GM12878 (cell line): ENCODE measurements at regions of chr17 and their contacts with region 1.

Region 1: DNA sequence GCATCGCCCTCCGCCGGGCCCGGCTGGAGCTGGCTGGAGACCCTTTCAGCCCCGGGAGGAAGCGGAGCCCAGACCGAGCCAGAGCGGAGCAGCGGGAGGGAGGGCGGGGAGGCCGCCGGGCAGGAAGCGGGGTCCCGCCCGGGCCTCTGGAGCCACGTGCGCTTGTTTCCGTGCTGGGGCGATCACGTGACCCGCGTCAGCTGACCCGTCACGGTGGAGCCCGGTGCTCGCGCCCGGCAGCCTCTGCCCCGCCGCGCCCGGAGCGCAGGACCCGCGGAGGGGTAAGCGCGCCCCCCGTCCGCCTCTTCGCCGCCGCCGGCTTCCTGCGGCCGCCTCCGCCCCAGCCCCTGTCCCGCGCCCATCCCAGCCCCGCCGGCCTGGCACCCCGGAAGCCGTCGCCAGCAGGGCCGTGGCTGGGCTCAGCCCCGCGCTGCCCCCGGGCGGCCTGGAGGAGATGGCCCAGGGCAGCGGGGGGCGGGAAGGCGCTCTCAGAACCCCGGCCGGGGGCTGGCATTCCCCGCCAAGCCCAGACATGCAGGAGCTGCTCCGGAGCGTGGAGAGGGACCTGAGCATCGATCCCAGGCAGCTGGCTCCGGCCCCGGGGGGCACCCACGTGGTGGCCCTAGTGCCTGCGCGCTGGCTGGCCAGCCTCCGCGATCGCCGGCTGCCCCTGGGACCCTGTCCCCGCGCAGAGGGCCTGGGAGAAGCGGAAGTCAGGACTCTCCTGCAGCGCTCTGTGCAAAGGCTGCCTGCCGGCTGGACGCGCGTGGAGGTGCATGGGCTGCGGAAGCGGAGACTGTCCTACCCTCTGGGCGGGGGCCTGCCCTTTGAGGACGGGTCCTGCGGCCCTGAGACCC is at the start of gene WDR81:
- DNase-seq: no peak
- ATAC-seq: peak; percentile 69
- H3K4me3 ChIP-seq: peak within 1 kb of the TSS; percentile 86
- H3K27ac ChIP-seq: peak within 1 kb of the TSS; percentile 95
- H3K4me1 ChIP-seq: peaks cover 28% of the 10 kb centered on the region
- H3K27me3 ChIP-seq: no peaks in the 10 kb centered on the region
- CTCF ChIP-seq: no peak
- EP300 ChIP-seq: no peak
- POLR2A ChIP-seq: peak; percentile 65
- RAD21 ChIP-seq: no peak
- polyA plus RNA-seq, gene WDR81: 0.13 TPM in 1 of 2 experiments, not detected in the other

Region 2: GRCh38 chr17:1267471-1267947 is 457.2 kb before region 1 on chr17:
- CTCF ChIA-PET with region 1: no interaction called
- POLR2A ChIA-PET with region 1: no interaction called
- RAD21 ChIA-PET with region 1: no interaction called
- SMC1A ChIA-PET with region 1: no interaction called
- in situ Hi-C with region 1: no loop called
- intact Hi-C with region 1: no loop called
- DNase-seq: no peak
- ATAC-seq: no peak
- H3K4me3 ChIP-seq: peak overlapping the region; percentile 81
- H3K27ac ChIP-seq: peak overlapping the region; percentile 55
- H3K4me1 ChIP-seq: peaks cover 4% of the 10 kb centered on the region
- H3K27me3 ChIP-seq: no peaks in the 10 kb centered on the region; a peak in 1 of 4 replicates
- CTCF ChIP-seq: no peak
- EP300 ChIP-seq: no peak
- POLR2A ChIP-seq: no peak
- RAD21 ChIP-seq: no peak

Region 3: DNA sequence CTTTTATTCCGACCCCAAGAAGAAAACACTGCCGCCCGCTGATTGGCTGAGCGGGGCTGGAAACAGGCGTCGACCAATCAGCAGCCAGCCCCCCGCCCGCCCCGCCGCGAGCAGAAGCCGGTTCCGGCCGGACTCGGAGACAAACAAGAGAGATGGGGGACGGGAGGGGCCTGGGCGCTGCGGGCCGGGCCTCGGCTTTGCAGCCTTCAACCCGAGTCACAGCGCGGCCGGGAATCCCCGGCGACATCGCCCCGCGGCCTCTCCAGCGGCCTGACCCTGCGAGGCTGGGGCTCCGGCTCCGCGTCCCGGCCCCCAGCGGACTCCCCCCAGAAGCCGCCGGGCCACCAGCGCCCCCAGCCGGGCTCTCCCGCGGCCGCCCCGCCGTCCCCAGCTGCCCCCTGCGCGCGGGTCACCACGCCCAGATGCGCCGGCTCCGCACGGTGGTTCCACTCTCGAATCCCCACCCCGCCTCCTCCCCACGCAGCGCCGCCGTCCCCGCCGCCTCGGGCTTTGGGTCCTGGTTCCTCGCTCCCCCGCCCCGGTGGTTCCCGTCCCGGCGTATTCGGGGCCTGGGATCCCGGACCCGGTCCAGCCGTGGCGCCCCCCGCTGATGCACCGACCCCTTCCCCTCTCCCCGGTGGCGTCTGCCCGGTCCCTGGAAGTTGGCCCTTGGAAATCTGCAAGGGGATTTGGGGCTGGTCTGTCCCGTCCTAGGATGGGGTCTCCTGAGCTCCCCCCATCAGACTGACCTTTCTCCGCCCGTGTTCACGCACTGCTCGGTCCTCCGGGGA is 95.7 kb before region 1 on chr17:
- CTCF ChIA-PET with region 1: no interaction called
- POLR2A ChIA-PET with region 1: no interaction called
- RAD21 ChIA-PET with region 1: no interaction called
- SMC1A ChIA-PET with region 1: no interaction called
- in situ Hi-C with region 1: no loop called
- intact Hi-C with region 1: no loop called
- DNase-seq: no peak
- ATAC-seq: peak; percentile 84
- H3K4me3 ChIP-seq: peak overlapping the region; percentile 88
- H3K27ac ChIP-seq: peak overlapping the region; percentile 87
- H3K4me1 ChIP-seq: peaks cover 42% of the 10 kb centered on the region
- H3K27me3 ChIP-seq: no peaks in the 10 kb centered on the region
- CTCF ChIP-seq: peak in 2 of 3 experiments; percentile 30 to 51; a peak in 4 of 6 replicates
- EP300 ChIP-seq: no peak
- POLR2A ChIP-seq: peak; percentile 70
- RAD21 ChIP-seq: peak; percentile 40; the same call in 1 of the 2 replicates

Region 4: DNA sequence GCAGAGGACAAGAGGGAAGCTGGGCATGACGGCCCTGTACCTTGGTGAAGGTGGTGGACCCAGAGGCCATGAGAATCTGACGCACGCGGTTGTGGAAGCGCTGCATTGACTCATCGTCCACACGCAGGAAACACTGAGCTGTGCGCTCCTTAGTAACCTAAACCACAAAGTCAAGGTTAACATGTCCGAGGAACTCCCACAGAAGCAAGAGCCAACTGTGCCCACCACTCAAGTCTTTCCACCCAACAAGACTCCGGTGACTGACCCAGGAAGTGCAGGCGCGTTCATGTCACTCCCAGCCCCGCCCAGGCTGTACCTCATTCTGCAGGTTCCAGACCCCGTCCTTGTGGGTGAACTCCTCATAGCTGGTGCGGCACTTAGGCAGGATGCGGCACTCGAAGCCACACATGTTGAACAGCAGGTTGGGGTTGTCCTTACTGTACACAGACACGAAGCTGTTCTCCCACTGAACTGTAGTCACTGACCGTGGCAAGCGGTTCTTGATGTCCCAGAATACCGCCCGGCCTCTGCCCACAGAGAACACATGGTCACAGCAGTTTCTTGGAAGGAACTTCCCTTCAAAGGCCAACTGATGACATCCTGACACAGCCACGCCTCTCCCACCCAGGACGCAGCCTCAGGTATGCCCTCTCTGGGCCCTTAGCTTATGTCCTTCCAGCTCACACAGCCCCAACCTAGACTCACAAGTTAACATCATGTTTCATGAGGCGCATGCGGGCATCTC is 51.5 kb before region 1 on chr17:
- CTCF ChIA-PET with region 1: interaction called, 8 read pairs
- POLR2A ChIA-PET with region 1: no interaction called
- RAD21 ChIA-PET with region 1: interaction called, 11 read pairs
- SMC1A ChIA-PET with region 1: interaction called, 6 read pairs
- in situ Hi-C with region 1: no loop called
- intact Hi-C with region 1: loop called (anchors 5 kb)
- DNase-seq: no peak
- ATAC-seq: no peak
- H3K4me3 ChIP-seq: no peak overlapping the region
- H3K27ac ChIP-seq: no peak overlapping the region
- H3K4me1 ChIP-seq: no peaks in the 10 kb centered on the region
- H3K27me3 ChIP-seq: no peaks in the 10 kb centered on the region
- CTCF ChIP-seq: no peak
- EP300 ChIP-seq: no peak
- POLR2A ChIP-seq: peak; percentile 66
- RAD21 ChIP-seq: no peak

Region 5: GRCh38 chr17:1743088-1743439 is 18.3 kb after region 1 on chr17:
- CTCF ChIA-PET with region 1: no interaction called
- POLR2A ChIA-PET with region 1: no interaction called
- RAD21 ChIA-PET with region 1: no interaction called
- SMC1A ChIA-PET with region 1: no interaction called
- in situ Hi-C with region 1: no loop called
- intact Hi-C with region 1: no loop called
- DNase-seq: no peak
- ATAC-seq: peak; percentile 22; the same call in 2 of the 3 replicates
- H3K4me3 ChIP-seq: no peak overlapping the region
- H3K27ac ChIP-seq: no peak overlapping the region
- H3K4me1 ChIP-seq: no peaks in the 10 kb centered on the region
- H3K27me3 ChIP-seq: no peaks in the 10 kb centered on the region
- CTCF ChIP-seq: no peak
- EP300 ChIP-seq: no peak
- POLR2A ChIP-seq: no peak
- RAD21 ChIP-seq: no peak

Region 6: GRCh38 chr17:1769822-1770477 is 45.2 kb after region 1 on chr17:
- CTCF ChIA-PET with region 1: interaction called, 19 read pairs
- POLR2A ChIA-PET with region 1: no interaction called
- RAD21 ChIA-PET with region 1: interaction called, 4 read pairs
- SMC1A ChIA-PET with region 1: interaction called, 3 read pairs
- in situ Hi-C with region 1: no loop called
- intact Hi-C with region 1: no loop called
- DNase-seq: no peak
- ATAC-seq: no peak; the same call in 2 of the 3 replicates
- H3K4me3 ChIP-seq: no peak overlapping the region
- H3K27ac ChIP-seq: no peak overlapping the region
- H3K4me1 ChIP-seq: peaks cover 7% of the 10 kb centered on the region
- H3K27me3 ChIP-seq: no peaks in the 10 kb centered on the region
- CTCF ChIP-seq: no peak
- EP300 ChIP-seq: no peak
- POLR2A ChIP-seq: 0 out of 2 replicates have a peak, but pooled peaks have one; percentile 29
- RAD21 ChIP-seq: no peak

Region 7: GRCh38 chr17:1789936-1790335 is 65.2 kb after region 1 on chr17:
- CTCF ChIA-PET with region 1: interaction called, 121 read pairs
- POLR2A ChIA-PET with region 1: no interaction called
- RAD21 ChIA-PET with region 1: interaction called, 80 read pairs
- SMC1A ChIA-PET with region 1: interaction called, 88 read pairs
- in situ Hi-C with region 1: no loop called
- intact Hi-C with region 1: no loop called
- DNase-seq: no peak
- ATAC-seq: peak; percentile 54
- H3K4me3 ChIP-seq: no peak overlapping the region
- H3K27ac ChIP-seq: no peak overlapping the region
- H3K4me1 ChIP-seq: no peaks in the 10 kb centered on the region
- H3K27me3 ChIP-seq: no peaks in the 10 kb centered on the region
- CTCF ChIP-seq: no peak; a peak in 1 of 6 replicates
- EP300 ChIP-seq: no peak
- POLR2A ChIP-seq: no peak
- RAD21 ChIP-seq: no peak

Region 8: DNA sequence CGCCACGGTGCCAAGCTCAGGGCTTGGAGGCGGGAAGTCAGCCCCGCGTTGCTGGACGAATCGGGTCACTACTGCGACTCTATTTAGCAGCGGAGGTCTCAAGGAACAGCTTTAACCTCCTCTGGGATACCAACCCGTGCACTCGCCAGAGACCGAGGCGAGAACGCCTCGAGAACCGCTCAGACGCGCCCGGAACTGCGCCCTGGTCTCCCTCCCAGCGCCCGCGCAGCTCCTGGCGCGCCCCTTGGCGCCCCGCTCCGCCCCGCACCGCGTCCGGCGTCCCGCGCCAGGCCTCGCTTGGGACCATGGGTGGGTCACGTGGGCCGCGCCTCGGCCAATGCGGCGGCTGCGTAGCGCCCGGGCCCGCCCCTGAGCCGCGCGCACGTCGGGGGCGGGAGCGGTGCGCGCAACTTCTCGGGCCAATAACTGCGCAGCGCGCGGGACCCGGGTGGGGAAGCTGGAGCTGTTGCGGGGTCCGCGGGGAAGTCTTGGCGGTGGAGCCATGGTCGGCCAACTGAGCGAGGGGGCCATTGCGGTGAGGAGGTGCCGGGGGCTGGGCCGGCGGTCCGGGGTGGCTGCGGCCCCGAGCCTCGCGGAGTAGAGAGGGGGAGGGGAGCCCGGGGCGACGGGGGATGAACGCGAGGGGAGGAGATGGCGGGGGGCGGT is 105.0 kb after region 1 on chr17 and contains the starts of genes RPA1 and SMYD4:
- CTCF ChIA-PET with region 1: interaction called, 26 read pairs
- POLR2A ChIA-PET with region 1: interaction called, 5 read pairs
- RAD21 ChIA-PET with region 1: interaction called, 17 read pairs
- SMC1A ChIA-PET with region 1: interaction called, 20 read pairs
- in situ Hi-C with region 1: loop called (anchors 5 kb)
- intact Hi-C with region 1: no loop called
- DNase-seq: peak; percentile 48
- ATAC-seq: peak; percentile 97
- H3K4me3 ChIP-seq: peak within 1 kb of the TSS; percentile 98
- H3K27ac ChIP-seq: peak within 1 kb of the TSS; percentile 83
- H3K4me1 ChIP-seq: peaks cover 15% of the 10 kb centered on the region
- H3K27me3 ChIP-seq: no peaks in the 10 kb centered on the region
- CTCF ChIP-seq: no peak
- EP300 ChIP-seq: no peak
- POLR2A ChIP-seq: peak; percentile 87
- RAD21 ChIP-seq: no peak
- polyA plus RNA-seq, gene RPA1: 35.9 to 50.6 TPM
- polyA plus RNA-seq, gene SMYD4: 2.1 to 2.6 TPM

Region 9: GRCh38 chr17:1882836-1883235 is 158.1 kb after region 1 on chr17:
- CTCF ChIA-PET with region 1: interaction called, 38 read pairs
- POLR2A ChIA-PET with region 1: interaction called, 3 read pairs
- RAD21 ChIA-PET with region 1: interaction called, 3 read pairs
- SMC1A ChIA-PET with region 1: interaction called, 6 read pairs
- in situ Hi-C with region 1: no loop called
- intact Hi-C with region 1: no loop called
- DNase-seq: no peak
- ATAC-seq: peak; percentile 49; the same call in 1 of the 3 replicates
- H3K4me3 ChIP-seq: no peak overlapping the region
- H3K27ac ChIP-seq: no peak overlapping the region
- H3K4me1 ChIP-seq: no peaks in the 10 kb centered on the region
- H3K27me3 ChIP-seq: no peaks in the 10 kb centered on the region
- CTCF ChIP-seq: peak; percentile 58 to 63 (median 62); a peak in 5 of 6 replicates
- EP300 ChIP-seq: no peak
- POLR2A ChIP-seq: no peak
- RAD21 ChIP-seq: peak; percentile 65